ENCODE measurements at regions of chr1 and their contacts with region 1.

Region 1: DNA sequence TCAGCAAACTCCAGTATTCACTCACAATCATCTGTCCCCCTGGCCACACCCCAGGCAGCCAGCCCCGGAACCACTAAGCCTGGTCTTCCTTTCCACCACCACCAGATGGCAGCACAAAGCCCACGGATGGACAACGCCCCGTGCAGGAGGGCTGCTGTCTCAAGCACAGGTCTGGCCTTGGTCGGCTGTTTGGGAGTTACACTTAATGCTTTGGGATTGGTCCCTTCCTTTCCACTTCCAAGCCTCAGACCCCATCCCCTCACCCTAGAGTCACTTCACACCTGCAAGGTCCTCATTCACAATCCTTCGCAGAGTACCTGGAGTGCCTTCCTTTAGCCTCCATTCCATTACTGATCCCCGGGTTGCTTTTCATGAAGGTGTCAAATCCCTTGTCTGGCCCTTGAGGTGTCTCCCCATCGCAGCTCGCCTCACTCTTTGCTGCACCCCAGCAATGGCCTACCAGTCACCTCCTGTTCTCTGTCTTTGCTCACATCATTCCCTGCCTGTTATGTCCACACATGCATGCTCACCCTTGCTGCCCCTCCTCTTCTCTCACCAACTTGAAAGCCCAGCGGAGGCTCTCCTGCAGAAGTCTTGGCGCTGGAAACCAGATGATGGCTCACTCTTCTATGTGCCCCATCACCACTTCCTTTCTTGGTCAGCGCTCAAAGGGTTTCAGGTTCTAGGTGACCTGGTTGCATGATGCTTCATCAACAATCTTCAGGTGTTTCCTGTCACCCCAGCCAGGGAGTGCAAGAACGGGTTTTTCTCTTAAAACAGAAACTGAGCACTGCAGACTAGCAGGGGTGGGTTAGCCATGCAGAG is 24.9 kb upstream of the KCNA2 start:
- DNase-seq: peak; percentile 66 to 89 (median 83)
- ATAC-seq: peak; percentile 78 to 84
- H3K4me3 Mint-ChIP-seq: no peak overlapping the region
- H3K27ac Mint-ChIP-seq: no peak overlapping the region
- H3K4me1 Mint-ChIP-seq: peaks cover 11 to 44% (median 32%) of the 10 kb centered on the region in 4 donors
- H3K27me3 Mint-ChIP-seq: no peaks in the 10 kb centered on the region

Region 2: GRCh38 chr1:110619412-110620249 is 11.4 kb before region 1 on chr1:
- POLR2A ChIA-PET with region 1: interaction called, 11 read pairs
- DNase-seq: peak; percentile 76 to 96 (median 92)
- ATAC-seq: peak; percentile 87
- H3K4me3 Mint-ChIP-seq: peak overlapping the region; percentile 81 to 93 (median 88)
- H3K27ac Mint-ChIP-seq: peak overlapping the region; percentile 88 to 97 (median 95)
- H3K4me1 Mint-ChIP-seq: peaks cover 29 to 50% (median 38%) of the 10 kb centered on the region in 4 donors
- H3K27me3 Mint-ChIP-seq: no peaks in the 10 kb centered on the region

Region 3: GRCh38 chr1:110645821-110646735 is 15.0 kb after region 1 on chr1:
- POLR2A ChIA-PET with region 1: interaction called, 32 read pairs
- DNase-seq: no peak
- ATAC-seq: no peak
- H3K4me3 Mint-ChIP-seq: peak overlapping the region in 4 of 10 donors; percentile 6 to 22 (median 12)
- H3K27ac Mint-ChIP-seq: peak overlapping the region in 5 of 10 donors; percentile 38 to 77 (median 64)
- H3K4me1 Mint-ChIP-seq: peaks cover 19 to 54% (median 38%) of the 10 kb centered on the region in 4 donors
- H3K27me3 Mint-ChIP-seq: no peaks in the 10 kb centered on the region

Region 4: DNA sequence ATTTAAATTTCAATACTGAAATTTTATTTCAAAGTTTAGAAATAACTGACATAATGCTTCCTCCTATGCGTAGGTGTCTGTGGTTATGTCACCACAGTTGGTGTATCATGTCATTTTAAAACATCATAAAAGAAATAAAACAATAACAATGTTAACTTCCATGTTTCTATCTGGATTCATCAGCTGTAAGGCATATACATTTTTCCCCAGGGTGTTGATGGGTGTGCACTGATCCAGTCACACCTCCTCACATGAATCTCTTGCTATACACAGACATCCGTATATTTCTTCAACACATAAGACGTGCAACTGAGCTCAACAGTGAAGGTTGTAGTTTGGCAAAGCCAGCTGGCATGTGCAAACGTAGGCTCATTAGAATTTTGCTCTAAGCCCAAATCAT is 37.5 kb after region 1 on chr1:
- POLR2A ChIA-PET with region 1: interaction called, 87 read pairs
- DNase-seq: peak in 5 of 10 donors; percentile 25 to 60 (median 42)
- ATAC-seq: peak; percentile 8 to 29
- H3K4me3 Mint-ChIP-seq: peak overlapping the region; percentile 53 to 98 (median 72)
- H3K27ac Mint-ChIP-seq: peak overlapping the region; percentile 70 to 96 (median 92)
- H3K4me1 Mint-ChIP-seq: peaks cover 22 to 50% (median 40%) of the 10 kb centered on the region in 4 donors
- H3K27me3 Mint-ChIP-seq: no peaks in the 10 kb centered on the region

Region 5: GRCh38 chr1:110674337-110675059 is 43.4 kb after region 1 on chr1 and contains the start of gene KCNA3:
- POLR2A ChIA-PET with region 1: interaction called, 87 read pairs
- DNase-seq: peak; percentile 59 to 82 (median 69)
- ATAC-seq: peak; percentile 26 to 42
- H3K4me3 Mint-ChIP-seq: peak within 1 kb of the TSS; percentile 91 to 100 (median 98)
- H3K27ac Mint-ChIP-seq: peak within 1 kb of the TSS; percentile 93 to 100 (median 99)
- H3K4me1 Mint-ChIP-seq: peaks cover 26 to 59% (median 44%) of the 10 kb centered on the region in 4 donors
- H3K27me3 Mint-ChIP-seq: no peaks in the 10 kb centered on the region
- polyA plus RNA-seq, gene KCNA3: 55.6 to 67.9 (median 66.4) TPM

Region 6: GRCh38 chr1:110766025-110766647 is 135.1 kb after region 1 on chr1:
- POLR2A ChIA-PET with region 1: interaction called, 13 read pairs
- DNase-seq: peak; percentile 15 to 74 (median 56)
- ATAC-seq: peak; percentile 74 to 84
- H3K4me3 Mint-ChIP-seq: no peak overlapping the region
- H3K27ac Mint-ChIP-seq: peak overlapping the region in 2 of 10 donors; percentile 12 to 57
- H3K4me1 Mint-ChIP-seq: peaks cover 2 to 6% (median 2%) of the 10 kb centered on the region in 4 donors
- H3K27me3 Mint-ChIP-seq: peaks cover 4 to 30% (median 8%) of the 10 kb centered on the region in 5 donors

Measured in naive thymus-derived CD8-positive, alpha-beta T cell (primary cell).